Naive thymus-derived CD4-positive, alpha-beta T cell (primary cell): ENCODE measurements at regions of chr1 and their contacts with region 1.

Region 1: DNA sequence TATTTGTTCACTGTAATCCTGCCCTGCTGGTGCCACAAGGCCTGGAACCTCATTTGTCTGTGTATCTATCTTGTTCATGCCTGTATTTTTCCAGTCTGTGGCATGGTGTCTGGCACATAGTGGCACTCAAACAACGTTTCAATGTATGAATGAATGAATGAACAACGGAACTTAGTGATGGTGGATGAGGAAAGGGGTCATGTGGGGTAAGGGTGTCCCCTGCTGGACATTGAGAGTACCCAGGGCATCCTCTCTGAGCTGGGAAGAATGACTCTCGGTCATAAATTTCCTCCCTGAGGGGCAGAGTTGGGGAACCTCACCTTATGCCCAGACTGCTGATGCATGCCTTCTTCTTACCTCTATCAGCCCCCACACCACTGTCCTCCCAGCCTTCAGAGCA is 18.9 kb upstream of the ZNF683 start:
- DNase-seq: peak in 5 of 9 donors; percentile 17 to 46 (median 43)
- ATAC-seq: peak; percentile 86
- H3K4me3 ChIP-seq: no peak overlapping the region
- H3K4me3 Mint-ChIP-seq: peak overlapping the region in 1 of 10 donors; percentile 55
- H3K27ac ChIP-seq: no peak overlapping the region
- H3K27ac Mint-ChIP-seq: peak overlapping the region in 2 of 9 donors; percentile 1 to 64
- H3K4me1 ChIP-seq: peaks cover 6 to 18% of the 10 kb centered on the region in 2 donors
- H3K4me1 Mint-ChIP-seq: peaks cover 8 to 49% (median 18%) of the 10 kb centered on the region in 7 donors
- H3K27me3 ChIP-seq: no peaks in the 10 kb centered on the region
- H3K27me3 Mint-ChIP-seq: peaks cover 0 to 14% (median 0%) of the 10 kb centered on the region in 5 donors

Region 2: DNA sequence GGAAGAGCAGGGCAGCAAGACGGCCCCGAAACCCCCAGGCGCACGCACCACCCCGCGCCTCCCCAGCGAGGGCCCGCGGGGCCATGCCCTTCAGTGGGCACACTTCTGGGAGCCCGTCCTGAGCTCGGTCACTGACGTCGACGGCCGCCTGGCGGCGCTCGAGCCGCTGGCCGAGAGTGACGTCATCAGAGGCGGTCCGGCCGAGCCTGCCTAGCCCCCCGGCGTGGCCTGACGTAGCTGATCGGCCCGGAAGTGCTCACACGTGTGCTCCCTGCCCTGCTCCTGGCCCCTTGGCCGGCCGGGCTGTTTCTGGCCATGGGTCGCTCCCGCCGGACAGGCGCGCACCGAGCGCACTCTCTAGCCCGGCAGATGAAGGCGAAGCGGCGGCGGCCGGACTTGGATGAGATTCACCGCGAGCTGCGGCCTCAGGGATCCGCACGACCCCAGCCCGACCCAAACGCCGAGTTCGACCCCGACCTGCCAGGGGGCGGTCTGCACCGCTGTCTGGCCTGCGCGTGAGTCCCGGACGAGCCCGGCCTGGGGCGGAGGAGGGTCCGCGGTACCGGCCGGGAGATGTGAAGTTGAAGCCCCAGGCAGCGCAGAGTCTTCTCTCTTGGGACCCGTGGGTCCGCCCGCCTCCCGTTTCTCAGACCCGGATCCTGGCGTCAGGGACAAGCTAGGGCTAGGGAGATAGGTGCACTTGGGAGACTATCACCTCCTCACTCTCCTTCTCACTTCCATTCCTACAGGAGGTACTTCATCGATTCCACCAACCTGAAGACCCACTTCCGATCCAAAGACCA is 221.6 kb before region 1 on chr1 and contains the start of gene ZNF593:
- CTCF ChIA-PET with region 1: no interaction called
- POLR2A ChIA-PET with region 1: no interaction called
- intact Hi-C with region 1: loop called (anchors 2 to 5 kb)
- DNase-seq: peak; percentile 52 to 92 (median 69)
- ATAC-seq: peak; percentile 96
- H3K4me3 ChIP-seq: peak within 1 kb of the TSS; percentile 72
- H3K4me3 Mint-ChIP-seq: peak within 1 kb of the TSS; percentile 83 to 90 (median 88)
- H3K27ac ChIP-seq: peak within 1 kb of the TSS; percentile 86
- H3K27ac Mint-ChIP-seq: peak within 1 kb of the TSS; percentile 48 to 91 (median 77)
- H3K4me1 ChIP-seq: peaks cover 7 to 10% of the 10 kb centered on the region in 2 donors
- H3K4me1 Mint-ChIP-seq: peaks cover 0 to 33% (median 15%) of the 10 kb centered on the region in 7 donors
- H3K27me3 ChIP-seq: no peaks in the 10 kb centered on the region
- H3K27me3 Mint-ChIP-seq: peaks cover 0 to 21% (median 0%) of the 10 kb centered on the region in 5 donors
- total RNA-seq, gene ZNF593: 7.8 to 36.3 (median 9.6) TPM

Region 3: GRCh38 chr1:26306290-26307229 is 84.9 kb before region 1 on chr1 and contains the start of gene UBXN11:
- CTCF ChIA-PET with region 1: no interaction called
- POLR2A ChIA-PET with region 1: no interaction called
- intact Hi-C with region 1: no loop called
- DNase-seq: peak; percentile 66 to 95 (median 89)
- ATAC-seq: peak; percentile 99
- H3K4me3 ChIP-seq: peak within 1 kb of the TSS; percentile 87
- H3K4me3 Mint-ChIP-seq: peak within 1 kb of the TSS; percentile 93 to 99 (median 98)
- H3K27ac ChIP-seq: peak within 1 kb of the TSS; percentile 76
- H3K27ac Mint-ChIP-seq: peak within 1 kb of the TSS; percentile 90 to 99 (median 96)
- H3K4me1 ChIP-seq: peaks cover 16 to 31% of the 10 kb centered on the region in 2 donors
- H3K4me1 Mint-ChIP-seq: peaks cover 25 to 58% (median 34%) of the 10 kb centered on the region in 7 donors
- H3K27me3 ChIP-seq: no peaks in the 10 kb centered on the region
- H3K27me3 Mint-ChIP-seq: no peaks in the 10 kb centered on the region
- total RNA-seq, gene UBXN11: 35.7 to 131 (median 124) TPM

Region 4: GRCh38 chr1:26336477-26337205 is 54.8 kb before region 1 on chr1:
- CTCF ChIA-PET with region 1: no interaction called
- POLR2A ChIA-PET with region 1: no interaction called
- intact Hi-C with region 1: loop called in 1 of 2 experiments (anchors 1 kb)
- DNase-seq: peak; percentile 55 to 79 (median 74)
- ATAC-seq: peak; percentile 96
- H3K4me3 ChIP-seq: peak overlapping the region; percentile 65
- H3K4me3 Mint-ChIP-seq: peak overlapping the region; percentile 86 to 92 (median 89)
- H3K27ac ChIP-seq: peak overlapping the region; percentile 58
- H3K27ac Mint-ChIP-seq: peak overlapping the region in 2 of 9 donors; percentile 9 to 68
- H3K4me1 ChIP-seq: peaks cover 5 to 7% of the 10 kb centered on the region in 2 donors
- H3K4me1 Mint-ChIP-seq: peaks cover 0 to 13% (median 10%) of the 10 kb centered on the region in 7 donors
- H3K27me3 ChIP-seq: no peaks in the 10 kb centered on the region
- H3K27me3 Mint-ChIP-seq: peaks cover 0 to 23% (median 0%) of the 10 kb centered on the region in 5 donors

Region 5: DNA sequence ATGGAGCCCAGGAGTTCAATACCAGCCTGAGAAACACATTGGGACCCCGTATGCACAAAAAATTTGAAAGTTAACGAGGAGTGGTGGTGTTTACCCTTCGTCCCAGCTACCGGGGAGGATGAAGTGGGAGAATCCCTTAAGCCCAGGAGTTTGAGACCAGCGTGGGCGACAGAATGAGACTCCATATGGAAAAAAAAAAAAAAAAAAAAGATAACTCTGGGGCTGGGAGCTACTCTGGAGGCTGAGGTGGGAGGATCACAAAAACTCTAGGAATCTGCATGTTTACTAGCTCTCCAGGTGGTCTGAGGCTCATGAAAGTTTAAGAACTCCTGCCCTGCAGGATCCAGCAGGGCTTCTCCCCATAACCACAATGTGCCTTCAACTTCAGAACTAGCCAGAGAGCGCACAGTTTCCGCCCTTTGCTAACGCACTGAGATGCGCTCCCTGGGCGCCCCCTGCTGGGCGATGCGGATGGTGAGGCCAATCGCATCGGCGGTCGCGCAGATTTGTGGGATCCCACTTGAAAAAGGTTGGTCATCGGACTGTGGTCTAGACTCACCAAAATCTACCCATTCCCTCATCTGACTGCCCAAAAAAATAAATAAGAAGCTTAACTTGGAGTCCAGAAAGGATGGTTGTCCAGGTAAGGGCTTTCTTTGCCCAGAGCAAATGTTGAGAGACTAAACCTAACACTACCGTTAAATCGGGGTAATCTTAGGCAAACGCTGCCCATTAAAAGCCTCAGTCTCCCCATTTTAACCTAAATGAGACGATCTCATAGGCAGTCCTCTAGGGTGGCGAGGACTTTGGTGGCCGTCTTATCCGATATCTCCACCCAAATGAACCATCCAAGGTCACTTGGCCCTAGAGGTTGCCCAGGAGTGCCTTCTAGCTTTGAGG is 27.7 kb before region 1 on chr1:
- CTCF ChIA-PET with region 1: interaction called, 12 read pairs
- POLR2A ChIA-PET with region 1: interaction called, 6 read pairs
- intact Hi-C with region 1: loop called (anchors 1 to 2 kb)
- DNase-seq: peak; percentile 71 to 87 (median 82)
- ATAC-seq: peak; percentile 84
- H3K4me3 ChIP-seq: no peak overlapping the region
- H3K4me3 Mint-ChIP-seq: peak overlapping the region in 6 of 10 donors; percentile 39 to 72 (median 40)
- H3K27ac ChIP-seq: no peak overlapping the region
- H3K27ac Mint-ChIP-seq: peak overlapping the region in 4 of 9 donors; percentile 20 to 52 (median 40)
- H3K4me1 ChIP-seq: peaks cover 30 to 44% of the 10 kb centered on the region in 2 donors
- H3K4me1 Mint-ChIP-seq: peaks cover 28 to 53% (median 47%) of the 10 kb centered on the region in 7 donors
- H3K27me3 ChIP-seq: no peaks in the 10 kb centered on the region
- H3K27me3 Mint-ChIP-seq: peaks cover 7 to 37% (median 16%) of the 10 kb centered on the region in 5 donors

Region 6: GRCh38 chr1:26372039-26372438 is 19.4 kb before region 1 on chr1:
- CTCF ChIA-PET with region 1: interaction called, 14 read pairs
- POLR2A ChIA-PET with region 1: interaction called, 14 read pairs
- intact Hi-C with region 1: no loop called
- DNase-seq: no peak
- ATAC-seq: no peak
- H3K4me3 ChIP-seq: no peak overlapping the region
- H3K4me3 Mint-ChIP-seq: peak overlapping the region in 9 of 10 donors; percentile 15 to 75 (median 56)
- H3K27ac ChIP-seq: no peak overlapping the region
- H3K27ac Mint-ChIP-seq: peak overlapping the region; percentile 42 to 93 (median 74)
- H3K4me1 ChIP-seq: peaks cover 66 to 73% of the 10 kb centered on the region in 2 donors
- H3K4me1 Mint-ChIP-seq: peaks cover 62 to 79% (median 73%) of the 10 kb centered on the region in 7 donors
- H3K27me3 ChIP-seq: no peaks in the 10 kb centered on the region
- H3K27me3 Mint-ChIP-seq: peaks cover 0 to 7% (median 0%) of the 10 kb centered on the region in 5 donors